Naive thymus-derived CD4-positive, alpha-beta T cell (primary cell): ENCODE measurements at regions of chr5 and their contacts with region 1.

Region 1: DNA sequence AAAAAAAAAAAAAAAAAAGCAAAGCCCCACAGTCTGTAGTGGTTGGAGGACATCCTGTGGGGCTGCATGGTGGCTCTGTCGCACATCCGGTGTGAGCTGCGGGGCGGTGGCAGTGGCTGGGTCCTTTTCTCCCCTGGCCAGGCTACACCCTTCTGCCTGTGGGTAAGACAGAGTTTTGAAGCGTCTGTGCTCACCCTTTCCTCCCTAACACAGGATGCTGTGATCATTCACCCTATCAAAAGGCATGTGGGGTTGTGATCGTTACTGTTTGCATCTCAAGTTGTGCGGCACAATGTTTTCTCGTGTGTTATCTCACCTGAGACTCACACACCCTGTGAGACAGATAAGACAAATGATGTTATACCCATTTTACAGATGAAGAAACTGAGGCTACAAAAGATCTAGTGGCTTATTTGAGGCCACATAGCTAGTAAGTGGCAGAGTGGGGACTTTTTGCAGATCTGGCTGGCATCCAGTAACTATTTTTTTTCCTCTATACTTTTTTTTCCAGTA is 17.5 kb downstream of the IRF1 start:
- DNase-seq: peak; percentile 53 to 93 (median 88)
- ATAC-seq: peak; percentile 85
- H3K4me3 ChIP-seq: no peak overlapping the region
- H3K4me3 Mint-ChIP-seq: peak overlapping the region in 9 of 10 donors; percentile 2 to 77 (median 68)
- H3K27ac ChIP-seq: peak overlapping the region; percentile 62
- H3K27ac Mint-ChIP-seq: peak overlapping the region; percentile 89 to 97 (median 96)
- H3K4me1 ChIP-seq: peaks cover 48 to 88% of the 10 kb centered on the region in 2 donors
- H3K4me1 Mint-ChIP-seq: peaks cover 45 to 89% (median 87%) of the 10 kb centered on the region in 7 donors
- H3K27me3 ChIP-seq: no peaks in the 10 kb centered on the region
- H3K27me3 Mint-ChIP-seq: no peaks in the 10 kb centered on the region

Region 2: DNA sequence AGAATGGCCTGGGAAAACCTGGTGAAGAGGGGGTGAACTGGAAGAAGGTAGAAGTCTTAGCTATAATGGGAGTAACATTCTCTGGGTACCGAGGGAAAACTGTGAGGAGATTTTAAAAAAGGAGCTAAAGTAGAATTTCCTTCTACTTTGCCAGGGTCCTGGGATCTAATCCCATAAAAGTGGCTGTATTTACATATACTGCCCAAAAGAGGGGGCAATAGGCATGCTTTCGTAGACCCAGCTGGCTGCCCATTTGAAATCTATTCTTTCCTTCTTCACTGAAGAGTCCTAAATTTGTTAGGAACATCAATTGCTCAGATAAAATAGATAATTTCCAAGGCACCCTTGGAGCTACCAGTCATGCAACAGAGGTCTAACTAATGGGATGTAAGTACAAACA is 1050.0 kb before region 1 on chr5:
- CTCF ChIA-PET with region 1: no interaction called
- POLR2A ChIA-PET with region 1: no interaction called
- intact Hi-C with region 1: no loop called
- DNase-seq: no peak
- ATAC-seq: no peak
- H3K4me3 ChIP-seq: no peak overlapping the region
- H3K4me3 Mint-ChIP-seq: no peak overlapping the region
- H3K27ac ChIP-seq: no peak overlapping the region
- H3K27ac Mint-ChIP-seq: peak overlapping the region in 8 of 9 donors; percentile 40 to 76 (median 60)
- H3K4me1 ChIP-seq: no peaks in the 10 kb centered on the region
- H3K4me1 Mint-ChIP-seq: peaks cover 0 to 24% (median 13%) of the 10 kb centered on the region in 7 donors
- H3K27me3 ChIP-seq: no peaks in the 10 kb centered on the region
- H3K27me3 Mint-ChIP-seq: no peaks in the 10 kb centered on the region

Region 3: DNA sequence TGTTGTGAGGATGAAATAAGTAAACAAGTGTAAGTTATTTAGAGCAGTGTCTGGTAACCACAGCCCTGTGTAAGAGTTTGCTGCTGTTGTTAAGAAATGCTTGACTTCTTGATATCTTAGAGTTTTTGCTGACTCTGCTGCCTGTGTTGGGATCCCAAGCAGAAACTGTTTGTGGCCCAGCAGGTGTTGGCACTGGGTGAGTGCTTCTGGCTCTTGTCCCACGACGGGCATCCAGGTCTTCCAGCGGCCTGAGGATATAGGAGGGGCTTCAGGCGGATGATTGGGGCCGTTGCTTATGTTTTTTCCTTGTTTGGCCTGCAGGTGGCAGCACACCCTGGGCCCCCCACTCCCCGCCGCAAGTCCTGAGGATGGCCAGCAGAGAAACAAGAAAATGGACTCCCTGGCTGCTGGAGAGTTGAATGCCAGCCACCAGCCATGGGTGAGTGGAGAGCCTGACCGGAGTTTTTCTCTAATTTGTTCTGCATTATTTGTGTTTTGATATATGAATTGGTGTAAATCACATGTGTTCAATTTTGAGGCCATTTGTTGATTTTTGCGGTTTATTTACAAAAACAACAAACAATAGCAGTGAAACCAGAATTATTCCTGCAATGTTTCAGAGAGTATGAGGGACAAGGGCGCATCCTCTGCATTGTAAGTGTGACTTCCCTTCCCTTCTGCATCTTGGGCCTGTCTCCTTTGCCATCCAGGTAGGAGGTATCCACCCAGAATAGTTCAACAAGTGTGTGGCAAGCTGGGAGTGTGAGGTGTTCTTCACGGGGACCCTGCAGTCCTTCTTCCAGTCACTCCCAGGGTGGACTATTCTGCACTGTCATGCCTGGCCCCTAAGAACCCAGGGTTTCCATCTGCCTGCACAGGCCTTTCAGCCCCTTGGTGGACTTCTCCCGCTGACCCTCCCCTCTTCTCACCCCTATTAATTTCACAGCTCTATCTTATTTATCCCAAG is 53.3 kb before region 1 on chr5:
- CTCF ChIA-PET with region 1: interaction called, 8 read pairs
- POLR2A ChIA-PET with region 1: interaction called, 150 read pairs
- intact Hi-C with region 1: loop called in 1 of 2 experiments (anchors 1 kb)
- DNase-seq: peak; percentile 42 to 72 (median 55)
- ATAC-seq: peak; percentile 84
- H3K4me3 ChIP-seq: peak overlapping the region; percentile 12
- H3K4me3 Mint-ChIP-seq: peak overlapping the region; percentile 54 to 88 (median 76)
- H3K27ac ChIP-seq: peak overlapping the region; percentile 77
- H3K27ac Mint-ChIP-seq: peak overlapping the region; percentile 79 to 99 (median 97)
- H3K4me1 ChIP-seq: peaks cover 71 to 92% of the 10 kb centered on the region in 2 donors
- H3K4me1 Mint-ChIP-seq: peaks cover 77 to 98% (median 95%) of the 10 kb centered on the region in 7 donors
- H3K27me3 ChIP-seq: no peaks in the 10 kb centered on the region
- H3K27me3 Mint-ChIP-seq: no peaks in the 10 kb centered on the region

Region 4: GRCh38 chr5:132437604-132438266 is 35.3 kb before region 1 on chr5:
- CTCF ChIA-PET with region 1: interaction called, 4 read pairs
- POLR2A ChIA-PET with region 1: interaction called, 23 read pairs
- intact Hi-C with region 1: no loop called
- DNase-seq: peak in 8 of 9 donors; percentile 36 to 66 (median 56)
- ATAC-seq: peak; percentile 88
- H3K4me3 ChIP-seq: peak overlapping the region; percentile 25
- H3K4me3 Mint-ChIP-seq: peak overlapping the region; percentile 60 to 79 (median 68)
- H3K27ac ChIP-seq: peak overlapping the region; percentile 67
- H3K27ac Mint-ChIP-seq: peak overlapping the region; percentile 79 to 93 (median 85)
- H3K4me1 ChIP-seq: peaks cover 61 to 86% of the 10 kb centered on the region in 2 donors
- H3K4me1 Mint-ChIP-seq: peaks cover 68 to 96% (median 83%) of the 10 kb centered on the region in 7 donors
- H3K27me3 ChIP-seq: no peaks in the 10 kb centered on the region
- H3K27me3 Mint-ChIP-seq: no peaks in the 10 kb centered on the region

Region 5: DNA sequence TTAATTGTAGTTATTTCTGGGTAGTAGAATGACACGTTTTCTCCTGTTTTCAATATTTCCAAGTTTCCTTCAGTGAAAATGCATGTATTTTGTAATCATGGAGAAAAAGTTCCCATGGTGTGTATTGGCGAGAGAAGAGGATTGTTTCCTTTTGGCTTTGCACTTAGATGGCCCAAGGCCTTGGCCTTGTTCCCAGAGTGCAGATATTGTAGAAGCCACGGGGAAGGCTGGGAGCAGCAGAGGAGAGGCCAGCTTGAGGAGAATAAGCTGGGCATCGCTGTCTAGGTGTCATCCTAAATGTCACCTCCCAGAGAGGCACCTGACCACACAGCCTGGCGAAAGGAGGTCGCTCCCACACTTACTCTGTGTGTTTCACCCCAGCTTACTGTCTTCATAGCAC is 26.4 kb before region 1 on chr5:
- CTCF ChIA-PET with region 1: interaction called, 3 read pairs
- POLR2A ChIA-PET with region 1: interaction called, 25 read pairs
- intact Hi-C with region 1: no loop called
- DNase-seq: no peak
- ATAC-seq: no peak
- H3K4me3 ChIP-seq: peak overlapping the region; percentile 3
- H3K4me3 Mint-ChIP-seq: peak overlapping the region in 8 of 10 donors; percentile 30 to 71 (median 61)
- H3K27ac ChIP-seq: no peak overlapping the region
- H3K27ac Mint-ChIP-seq: peak overlapping the region in 8 of 9 donors; percentile 64 to 94 (median 79)
- H3K4me1 ChIP-seq: peaks cover 54 to 76% of the 10 kb centered on the region in 2 donors
- H3K4me1 Mint-ChIP-seq: peaks cover 52 to 93% (median 76%) of the 10 kb centered on the region in 7 donors
- H3K27me3 ChIP-seq: no peaks in the 10 kb centered on the region
- H3K27me3 Mint-ChIP-seq: no peaks in the 10 kb centered on the region

Region 6: GRCh38 chr5:132456296-132457001 is 16.6 kb before region 1 on chr5:
- CTCF ChIA-PET with region 1: interaction called, 24 read pairs
- POLR2A ChIA-PET with region 1: interaction called, 222 read pairs
- intact Hi-C with region 1: loop called (anchors 1 to 2 kb)
- DNase-seq: peak in 8 of 9 donors; percentile 55 to 80 (median 70)
- ATAC-seq: peak; percentile 84
- H3K4me3 ChIP-seq: peak overlapping the region; percentile 40
- H3K4me3 Mint-ChIP-seq: peak overlapping the region; percentile 60 to 85 (median 78)
- H3K27ac ChIP-seq: peak overlapping the region; percentile 77
- H3K27ac Mint-ChIP-seq: peak overlapping the region; percentile 93 to 100 (median 99)
- H3K4me1 ChIP-seq: peaks cover 89 to 96% of the 10 kb centered on the region in 2 donors
- H3K4me1 Mint-ChIP-seq: peaks cover 81 to 94% (median 91%) of the 10 kb centered on the region in 7 donors
- H3K27me3 ChIP-seq: no peaks in the 10 kb centered on the region
- H3K27me3 Mint-ChIP-seq: no peaks in the 10 kb centered on the region

Region 7: GRCh38 chr5:132484391-132484725 is 11.3 kb after region 1 on chr5:
- CTCF ChIA-PET with region 1: interaction called, 46 read pairs
- POLR2A ChIA-PET with region 1: interaction called, 268 read pairs
- intact Hi-C with region 1: no loop called
- DNase-seq: peak in 3 of 9 donors; percentile 11 to 19 (median 19)
- ATAC-seq: no peak
- H3K4me3 ChIP-seq: no peak overlapping the region
- H3K4me3 Mint-ChIP-seq: peak overlapping the region in 8 of 10 donors; percentile 14 to 97 (median 44)
- H3K27ac ChIP-seq: peak overlapping the region; percentile 99
- H3K27ac Mint-ChIP-seq: peak overlapping the region; percentile 59 to 98 (median 87)
- H3K4me1 ChIP-seq: peaks cover 31 to 76% of the 10 kb centered on the region in 2 donors
- H3K4me1 Mint-ChIP-seq: peaks cover 49 to 77% (median 66%) of the 10 kb centered on the region in 7 donors
- H3K27me3 ChIP-seq: no peaks in the 10 kb centered on the region
- H3K27me3 Mint-ChIP-seq: peaks cover 0 to 2% (median 0%) of the 10 kb centered on the region in 5 donors

Region 8: GRCh38 chr5:132495667-132496190 is 22.7 kb after region 1 on chr5:
- CTCF ChIA-PET with region 1: interaction called, 46 read pairs
- POLR2A ChIA-PET with region 1: interaction called, 268 read pairs
- intact Hi-C with region 1: loop called (anchors 1 to 2 kb)
- DNase-seq: peak in 7 of 9 donors; percentile 42 to 79 (median 54)
- ATAC-seq: peak; percentile 48
- H3K4me3 ChIP-seq: peak overlapping the region; percentile 91
- H3K4me3 Mint-ChIP-seq: peak overlapping the region; percentile 86 to 99 (median 97)
- H3K27ac ChIP-seq: peak overlapping the region; percentile 99
- H3K27ac Mint-ChIP-seq: peak overlapping the region; percentile 90 to 99 (median 97)
- H3K4me1 ChIP-seq: peaks cover 48 to 57% of the 10 kb centered on the region in 2 donors
- H3K4me1 Mint-ChIP-seq: peaks cover 36 to 79% (median 68%) of the 10 kb centered on the region in 7 donors
- H3K27me3 ChIP-seq: no peaks in the 10 kb centered on the region
- H3K27me3 Mint-ChIP-seq: no peaks in the 10 kb centered on the region